Prostate gland (tissue), 2 donors: ENCODE measurements at regions of chr1 and their contacts with region 1.

Region 1: GRCh38 chr1:193183019-193183627 is 3.3 kb downstream of the B3GALT2 start:
- DNase-seq: peak; percentile 20
- H3K4me3 ChIP-seq: no peak overlapping the region
- H3K27ac ChIP-seq: no peak overlapping the region
- H3K4me1 ChIP-seq: peaks cover 2% of the 10 kb centered on the region
- H3K27me3 ChIP-seq: no peaks in the 10 kb centered on the region
- CTCF ChIP-seq: peak; percentile 71 to 87 (median 75)
- POLR2A ChIP-seq: no peak

Region 2: GRCh38 chr1:193348091-193348768 is 165.1 kb after region 1 on chr1:
- intact Hi-C with region 1: loop called (anchors 10 kb)
- DNase-seq: no peak
- H3K4me3 ChIP-seq: no peak overlapping the region
- H3K27ac ChIP-seq: no peak overlapping the region
- H3K4me1 ChIP-seq: no peaks in the 10 kb centered on the region
- H3K27me3 ChIP-seq: no peaks in the 10 kb centered on the region
- CTCF ChIP-seq: no peak
- POLR2A ChIP-seq: no peak

Region 3: GRCh38 chr1:193417945-193418744 is 235.0 kb after region 1 on chr1:
- intact Hi-C with region 1: loop called (anchors 5 kb)
- DNase-seq: no peak
- H3K4me3 ChIP-seq: peak overlapping the region in 1 of 2 donors; percentile 7
- H3K27ac ChIP-seq: peak overlapping the region; percentile 1 to 37
- H3K4me1 ChIP-seq: no peaks in the 10 kb centered on the region
- H3K27me3 ChIP-seq: no peaks in the 10 kb centered on the region
- CTCF ChIP-seq: no peak
- POLR2A ChIP-seq: no peak

Region 4: DNA sequence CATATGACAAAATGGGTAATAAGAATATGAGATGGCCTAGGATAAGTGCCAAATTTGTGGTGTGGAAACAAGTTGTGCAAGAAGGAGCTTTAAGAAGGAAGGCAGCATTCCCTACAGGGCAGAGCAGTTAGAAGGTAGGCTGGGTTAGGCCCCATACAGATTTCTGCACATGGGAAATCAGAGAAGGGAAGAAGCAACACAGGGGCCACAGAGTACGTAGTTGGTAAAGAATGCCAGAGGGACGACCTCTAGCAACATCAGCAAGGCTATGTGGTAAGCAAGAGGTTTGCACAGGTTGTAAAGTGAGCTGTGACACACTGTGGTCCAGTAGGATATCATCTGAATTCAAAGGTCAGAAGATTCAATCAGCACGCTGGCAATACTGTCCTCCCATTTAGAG is 768.9 kb after region 1 on chr1:
- intact Hi-C with region 1: loop called (anchors 5 kb)
- DNase-seq: no peak
- H3K4me3 ChIP-seq: no peak overlapping the region
- H3K27ac ChIP-seq: no peak overlapping the region
- H3K4me1 ChIP-seq: no peaks in the 10 kb centered on the region
- H3K27me3 ChIP-seq: no peaks in the 10 kb centered on the region
- CTCF ChIP-seq: no peak
- POLR2A ChIP-seq: no peak

Region 5: GRCh38 chr1:194295685-194296084 is 1112.6 kb after region 1 on chr1:
- intact Hi-C with region 1: loop called (anchors 10 kb)
- DNase-seq: no peak
- H3K4me3 ChIP-seq: no peak overlapping the region
- H3K27ac ChIP-seq: no peak overlapping the region
- H3K4me1 ChIP-seq: no peaks in the 10 kb centered on the region
- H3K27me3 ChIP-seq: no peaks in the 10 kb centered on the region
- CTCF ChIP-seq: peak in 3 of 4 experiments; percentile 24 to 45 (median 27)
- POLR2A ChIP-seq: no peak